ENCODE measurements at regions of chr10 and their contacts with region 1.

Region 1: GRCh38 chr10:130190055-130190736 is 54.0 kb downstream of the GLRX3 start:
- DNase-seq: peak; percentile 32
- H3K4me3 ChIP-seq: peak overlapping the region; percentile 47
- H3K27me3 ChIP-seq: no peaks in the 10 kb centered on the region
- CTCF ChIP-seq: peak; percentile 68

Region 2: DNA sequence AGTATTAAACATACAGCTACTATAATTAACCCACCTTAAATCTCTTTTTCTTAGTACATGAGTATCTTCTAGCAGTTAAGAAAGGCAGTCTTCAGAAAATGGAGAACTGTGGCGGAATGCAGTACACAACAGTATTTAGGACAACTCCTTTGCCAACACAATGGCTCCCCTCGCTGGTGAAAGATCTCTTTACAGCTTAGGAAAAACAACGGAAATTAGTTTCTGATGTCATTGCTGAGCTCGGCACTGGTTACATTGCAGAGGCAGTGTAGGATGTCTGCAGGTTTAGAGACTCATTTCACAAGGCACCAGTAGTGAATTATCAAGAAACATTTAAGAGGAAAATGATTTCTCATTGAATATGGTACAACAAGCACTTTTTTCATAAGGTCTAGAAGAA is 10.6 kb before region 1 on chr10:
- CTCF ChIA-PET with region 1: interaction called, 27 read pairs
- POLR2A ChIA-PET with region 1: no interaction called
- DNase-seq: peak; percentile 9
- H3K4me3 ChIP-seq: no peak overlapping the region
- H3K27me3 ChIP-seq: no peaks in the 10 kb centered on the region
- CTCF ChIP-seq: peak; percentile 53

Region 3: GRCh38 chr10:130200179-130201052 is 10.2 kb after region 1 on chr10:
- CTCF ChIA-PET with region 1: interaction called, 12 read pairs
- POLR2A ChIA-PET with region 1: no interaction called
- DNase-seq: no peak
- H3K4me3 ChIP-seq: no peak overlapping the region
- H3K27me3 ChIP-seq: no peaks in the 10 kb centered on the region
- CTCF ChIP-seq: no peak

Region 4: GRCh38 chr10:131874991-131875451 is 1684.8 kb after region 1 on chr10:
- CTCF ChIA-PET with region 1: interaction called, 29 read pairs
- POLR2A ChIA-PET with region 1: no interaction called
- DNase-seq: peak; percentile 6
- H3K4me3 ChIP-seq: no peak overlapping the region
- H3K27me3 ChIP-seq: no peaks in the 10 kb centered on the region; the same call in 1 of the 2 replicates
- CTCF ChIP-seq: peak; percentile 76

Measured in BJ (cell line).